Caco-2 (cell line): ENCODE measurements at regions of chr11 and their contacts with region 1.

Region 1: GRCh38 chr11:12331239-12331874 is 46.0 kb upstream of the PARVA start:
- DNase-seq: peak; percentile 83
- H3K4me3 ChIP-seq: no peak overlapping the region
- H3K4me3 Mint-ChIP-seq: no peak overlapping the region
- H3K27ac Mint-ChIP-seq: no peak overlapping the region
- H3K4me1 ChIP-seq: no peaks in the 10 kb centered on the region
- H3K4me1 Mint-ChIP-seq: peaks cover 6% of the 10 kb centered on the region
- H3K27me3 ChIP-seq: 0 out of 2 replicates have a peak, but pooled peaks cover 1% of the 10 kb centered on the region
- H3K27me3 Mint-ChIP-seq: no peaks in the 10 kb centered on the region
- CTCF ChIP-seq: peak; percentile 76 to 81

Region 2: DNA sequence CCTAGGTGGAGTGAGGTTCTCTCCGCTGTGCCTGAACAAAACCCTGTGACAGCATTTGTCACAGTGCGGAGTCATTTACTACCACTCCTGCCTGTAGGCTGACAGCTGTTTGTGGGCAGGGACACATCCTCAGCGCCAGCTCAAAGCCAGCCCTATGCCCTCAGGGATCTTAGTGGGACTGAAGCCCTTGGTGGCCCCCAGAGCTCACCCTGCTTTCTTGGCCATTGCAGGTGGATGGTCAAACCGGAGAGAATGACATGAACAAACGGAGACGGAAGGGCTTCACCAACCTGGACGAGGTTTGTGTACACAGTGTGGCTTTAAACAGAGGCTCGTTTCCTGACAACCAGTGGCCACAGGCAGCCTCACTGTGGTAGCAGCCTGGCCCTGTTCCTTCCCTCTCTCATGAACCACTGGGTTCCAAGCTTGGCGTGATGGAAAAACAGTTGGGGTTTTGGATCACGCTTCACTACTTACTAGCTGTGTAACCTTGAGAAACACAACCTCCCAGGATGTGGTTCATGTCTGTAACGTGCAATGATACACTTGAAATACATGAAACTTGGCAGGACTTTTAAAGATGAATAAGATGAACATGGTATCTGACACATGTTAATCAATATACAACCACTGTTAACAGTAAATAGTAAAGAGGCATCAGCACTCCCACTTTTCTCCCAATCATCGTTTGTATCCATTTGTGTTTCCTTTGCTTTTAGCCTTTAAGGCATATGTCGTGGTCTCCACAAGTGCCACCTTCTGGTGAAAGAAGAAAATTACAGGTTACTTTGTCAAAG is 95.2 kb before region 1 on chr11:
- CTCF ChIA-PET with region 1: no interaction called
- POLR2A ChIA-PET with region 1: no interaction called
- intact Hi-C with region 1: no loop called
- DNase-seq: peak in 1 of 2 experiments; percentile 68
- H3K4me3 ChIP-seq: no peak overlapping the region
- H3K4me3 Mint-ChIP-seq: no peak overlapping the region
- H3K27ac Mint-ChIP-seq: peak overlapping the region; percentile 75
- H3K4me1 ChIP-seq: peaks cover 68% of the 10 kb centered on the region
- H3K4me1 Mint-ChIP-seq: peaks cover 48% of the 10 kb centered on the region
- H3K27me3 ChIP-seq: no peaks in the 10 kb centered on the region
- H3K27me3 Mint-ChIP-seq: no peaks in the 10 kb centered on the region
- CTCF ChIP-seq: peak; percentile 62 to 70

Region 3: GRCh38 chr11:12411806-12412727 is 80.7 kb after region 1 on chr11:
- CTCF ChIA-PET with region 1: no interaction called
- POLR2A ChIA-PET with region 1: no interaction called
- intact Hi-C with region 1: loop called (anchors 5 kb)
- DNase-seq: peak; percentile 79 to 86
- H3K4me3 ChIP-seq: no peak overlapping the region
- H3K4me3 Mint-ChIP-seq: peak overlapping the region; percentile 39
- H3K27ac Mint-ChIP-seq: peak overlapping the region; percentile 71
- H3K4me1 ChIP-seq: peaks cover 18% of the 10 kb centered on the region
- H3K4me1 Mint-ChIP-seq: peaks cover 22% of the 10 kb centered on the region
- H3K27me3 ChIP-seq: no peaks in the 10 kb centered on the region
- H3K27me3 Mint-ChIP-seq: no peaks in the 10 kb centered on the region
- CTCF ChIP-seq: peak; percentile 85 to 92

Region 4: DNA sequence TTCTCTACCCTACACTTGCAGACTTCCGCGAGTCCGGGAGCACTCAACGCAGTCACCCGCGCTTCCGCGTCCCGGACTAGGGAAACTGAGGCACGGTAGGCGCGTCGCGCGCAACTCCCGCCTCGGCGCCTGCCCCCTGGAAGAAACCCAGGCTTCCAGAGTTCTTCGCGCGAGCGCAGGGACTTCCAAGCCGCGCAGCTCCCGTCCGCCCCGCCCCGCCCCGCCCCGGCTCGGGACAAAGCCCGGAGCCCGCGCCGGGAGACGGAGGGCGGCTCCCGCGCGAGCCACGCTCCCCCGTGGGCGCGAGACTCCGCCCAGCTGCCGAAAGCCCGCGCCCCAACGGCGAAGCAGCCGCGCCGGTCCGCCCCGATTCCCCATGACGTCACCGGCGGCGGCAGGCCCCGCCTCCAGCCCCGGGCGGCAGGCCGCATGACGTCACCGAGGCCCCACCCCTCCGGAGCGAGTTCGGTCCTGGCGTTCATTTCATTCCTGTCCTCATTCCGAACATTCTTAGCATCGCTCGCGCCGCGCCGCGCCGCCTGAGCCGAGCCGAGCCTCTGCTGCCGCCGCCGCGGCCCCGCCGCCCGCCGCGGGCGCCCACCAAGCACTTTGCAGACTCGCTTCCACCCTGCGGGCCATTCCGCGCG is 342.7 kb after region 1 on chr11 and contains the start of gene TEAD1:
- CTCF ChIA-PET with region 1: interaction called, 4 read pairs
- POLR2A ChIA-PET with region 1: no interaction called
- intact Hi-C with region 1: loop called (anchors 10 kb)
- DNase-seq: peak; percentile 97 to 100
- H3K4me3 ChIP-seq: peak within 1 kb of the TSS; percentile 81
- H3K4me3 Mint-ChIP-seq: peak within 1 kb of the TSS; percentile 79
- H3K27ac Mint-ChIP-seq: peak within 1 kb of the TSS; percentile 91
- H3K4me1 ChIP-seq: peaks cover 20% of the 10 kb centered on the region; the same call in 1 of the 2 replicates
- H3K4me1 Mint-ChIP-seq: peaks cover 32% of the 10 kb centered on the region
- H3K27me3 ChIP-seq: no peaks in the 10 kb centered on the region
- H3K27me3 Mint-ChIP-seq: no peaks in the 10 kb centered on the region
- CTCF ChIP-seq: no peak
- total RNA-seq, gene TEAD1: 134 and 144 TPM in 2 replicates

Region 5: GRCh38 chr11:12888525-12889158 is 557.3 kb after region 1 on chr11:
- CTCF ChIA-PET with region 1: interaction called, 18 read pairs
- POLR2A ChIA-PET with region 1: no interaction called
- intact Hi-C with region 1: loop called (anchors 1 kb)
- DNase-seq: peak; percentile 77 to 82
- H3K4me3 ChIP-seq: no peak overlapping the region
- H3K4me3 Mint-ChIP-seq: no peak overlapping the region
- H3K27ac Mint-ChIP-seq: peak overlapping the region; percentile 27
- H3K4me1 ChIP-seq: peaks cover 6% of the 10 kb centered on the region
- H3K4me1 Mint-ChIP-seq: peaks cover 10% of the 10 kb centered on the region
- H3K27me3 ChIP-seq: no peaks in the 10 kb centered on the region
- H3K27me3 Mint-ChIP-seq: no peaks in the 10 kb centered on the region
- CTCF ChIP-seq: peak; percentile 62 to 78

Region 6: DNA sequence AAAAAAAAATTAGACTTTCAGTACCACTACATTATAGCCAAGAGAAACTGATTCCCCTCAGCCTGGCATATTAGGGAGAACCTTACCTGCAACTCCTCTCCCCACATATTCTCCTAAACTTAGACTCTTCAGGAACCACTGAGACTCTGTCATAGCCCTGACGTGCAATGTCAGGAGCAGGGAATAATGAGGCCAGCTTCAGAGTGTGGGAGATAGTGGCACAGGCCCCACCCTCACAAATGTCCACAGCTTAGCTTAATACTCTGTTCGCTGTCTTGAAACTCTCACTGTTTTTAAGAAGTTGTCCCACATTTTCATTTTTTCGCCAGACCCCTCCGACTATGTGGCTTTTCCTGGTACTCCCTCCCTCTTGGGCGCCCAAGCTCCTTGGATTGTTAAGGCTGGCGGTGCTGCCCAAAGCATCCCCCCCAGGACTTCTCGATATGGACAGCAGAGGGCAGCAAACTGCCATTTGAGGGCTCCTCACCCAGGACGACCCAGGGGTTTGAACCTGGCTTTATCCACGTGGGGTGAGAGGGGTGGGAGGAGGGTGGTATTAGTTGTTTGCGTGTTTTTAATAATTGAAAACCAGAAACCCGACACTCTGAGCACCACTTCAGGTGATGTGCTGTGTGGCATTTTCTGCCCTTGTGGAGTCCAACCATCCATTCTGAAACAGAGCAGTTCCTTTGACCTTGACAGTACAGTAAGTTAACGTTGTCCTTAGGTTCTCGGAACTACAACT is 632.6 kb after region 1 on chr11:
- CTCF ChIA-PET with region 1: interaction called, 6 read pairs
- POLR2A ChIA-PET with region 1: no interaction called
- intact Hi-C with region 1: loop called (anchors 1 kb)
- DNase-seq: peak; percentile 70 to 85
- H3K4me3 ChIP-seq: no peak overlapping the region
- H3K4me3 Mint-ChIP-seq: no peak overlapping the region
- H3K27ac Mint-ChIP-seq: no peak overlapping the region
- H3K4me1 ChIP-seq: no peaks in the 10 kb centered on the region
- H3K4me1 Mint-ChIP-seq: no peaks in the 10 kb centered on the region
- H3K27me3 ChIP-seq: no peaks in the 10 kb centered on the region
- H3K27me3 Mint-ChIP-seq: peaks cover 5% of the 10 kb centered on the region
- CTCF ChIP-seq: peak; percentile 81 to 93